Naive thymus-derived CD4-positive, alpha-beta T cell (primary cell): ENCODE measurements at regions of chr3 and their contacts with region 1.

Region 1: GRCh38 chr3:49339945-49340800 is at the start of gene USP4:
- DNase-seq: peak; percentile 78 to 93 (median 91)
- ATAC-seq: peak; percentile 91
- H3K4me3 ChIP-seq: peak within 1 kb of the TSS; percentile 89
- H3K4me3 Mint-ChIP-seq: peak within 1 kb of the TSS; percentile 81 to 96 (median 86)
- H3K27ac ChIP-seq: peak within 1 kb of the TSS; percentile 95
- H3K27ac Mint-ChIP-seq: peak within 1 kb of the TSS; percentile 95 to 99 (median 98)
- H3K4me1 ChIP-seq: peaks cover 23 to 30% of the 10 kb centered on the region in 2 donors
- H3K4me1 Mint-ChIP-seq: peaks cover 32 to 61% (median 47%) of the 10 kb centered on the region in 7 donors
- H3K27me3 ChIP-seq: no peaks in the 10 kb centered on the region
- H3K27me3 Mint-ChIP-seq: no peaks in the 10 kb centered on the region
- total RNA-seq, gene USP4: 98.3 to 135 (median 109) TPM

Region 2: GRCh38 chr3:48635222-48636021 is 704.8 kb before region 1 on chr3 and contains the start of gene SLC26A6:
- CTCF ChIA-PET with region 1: no interaction called
- POLR2A ChIA-PET with region 1: no interaction called
- intact Hi-C with region 1: loop called in 1 of 2 experiments (anchors 5 kb)
- DNase-seq: peak; percentile 81 to 98 (median 86)
- ATAC-seq: peak; percentile 98
- H3K4me3 ChIP-seq: peak within 1 kb of the TSS; percentile 76
- H3K4me3 Mint-ChIP-seq: peak within 1 kb of the TSS; percentile 79 to 92 (median 88)
- H3K27ac ChIP-seq: peak within 1 kb of the TSS; percentile 70
- H3K27ac Mint-ChIP-seq: peak within 1 kb of the TSS in 7 of 9 donors; percentile 12 to 84 (median 68)
- H3K4me1 ChIP-seq: peaks cover 0 to 11% of the 10 kb centered on the region in 2 donors
- H3K4me1 Mint-ChIP-seq: peaks cover 4 to 31% (median 22%) of the 10 kb centered on the region in 7 donors
- H3K27me3 ChIP-seq: no peaks in the 10 kb centered on the region
- H3K27me3 Mint-ChIP-seq: no peaks in the 10 kb centered on the region
- total RNA-seq, gene SLC26A6: 15.1 to 37.6 (median 31.2) TPM

Region 3: DNA sequence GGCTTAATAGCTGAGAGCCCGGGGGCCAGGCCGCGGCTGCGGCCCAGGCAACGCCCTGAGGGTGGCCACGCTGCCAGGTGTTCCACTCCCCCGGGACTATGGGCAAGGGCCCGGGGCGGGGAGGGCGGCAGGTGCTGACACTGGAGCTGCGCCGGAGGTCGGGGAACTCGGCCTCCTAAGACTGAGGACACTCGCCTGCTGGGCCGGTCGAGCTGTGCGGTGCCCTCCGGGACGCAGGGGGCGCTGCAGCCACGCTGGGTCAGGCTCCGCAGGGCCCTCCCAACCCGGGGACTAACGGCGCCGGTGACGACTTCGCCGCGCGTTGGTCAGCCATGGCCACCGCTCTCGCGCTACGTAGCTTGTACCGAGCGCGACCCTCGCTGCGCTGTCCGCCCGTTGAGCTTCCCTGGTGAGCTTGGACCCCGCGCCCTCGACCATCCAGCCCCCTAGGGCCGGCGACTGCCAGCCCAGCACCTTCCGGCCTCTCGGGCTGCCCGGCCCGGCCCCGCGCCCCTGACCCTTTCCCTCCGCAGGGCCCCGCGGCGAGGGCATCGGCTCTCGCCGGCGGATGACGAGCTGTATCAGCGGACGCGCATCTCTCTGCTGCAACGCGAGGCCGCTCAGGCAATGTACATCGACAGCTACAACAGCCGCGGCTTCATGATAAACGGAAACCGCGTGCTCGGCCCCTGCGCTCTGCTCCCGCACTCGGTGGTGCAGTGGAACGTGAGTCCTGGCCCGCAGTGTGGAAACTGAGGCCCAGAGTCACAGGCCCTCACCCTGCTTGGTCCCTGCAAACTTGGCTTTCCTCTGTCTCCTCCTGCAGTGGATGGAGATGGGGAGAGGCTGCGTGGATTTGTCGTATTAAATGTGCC is 318.1 kb before region 1 on chr3 and contains the start of gene NDUFAF3:
- CTCF ChIA-PET with region 1: no interaction called
- POLR2A ChIA-PET with region 1: interaction called, 16 read pairs
- intact Hi-C with region 1: loop called (anchors 1 to 2 kb)
- DNase-seq: peak; percentile 84 to 96 (median 89)
- ATAC-seq: peak; percentile 89
- H3K4me3 ChIP-seq: peak within 1 kb of the TSS; percentile 99
- H3K4me3 Mint-ChIP-seq: peak within 1 kb of the TSS; percentile 92 to 99 (median 97)
- H3K27ac ChIP-seq: peak within 1 kb of the TSS; percentile 98
- H3K27ac Mint-ChIP-seq: peak within 1 kb of the TSS; percentile 95 to 99 (median 98)
- H3K4me1 ChIP-seq: peaks cover 24 to 25% of the 10 kb centered on the region in 2 donors
- H3K4me1 Mint-ChIP-seq: peaks cover 21 to 61% (median 47%) of the 10 kb centered on the region in 7 donors
- H3K27me3 ChIP-seq: no peaks in the 10 kb centered on the region
- H3K27me3 Mint-ChIP-seq: peaks cover 0 to 2% (median 0%) of the 10 kb centered on the region in 5 donors
- total RNA-seq, gene NDUFAF3: 63.8 to 110 (median 89.3) TPM

Region 4: DNA sequence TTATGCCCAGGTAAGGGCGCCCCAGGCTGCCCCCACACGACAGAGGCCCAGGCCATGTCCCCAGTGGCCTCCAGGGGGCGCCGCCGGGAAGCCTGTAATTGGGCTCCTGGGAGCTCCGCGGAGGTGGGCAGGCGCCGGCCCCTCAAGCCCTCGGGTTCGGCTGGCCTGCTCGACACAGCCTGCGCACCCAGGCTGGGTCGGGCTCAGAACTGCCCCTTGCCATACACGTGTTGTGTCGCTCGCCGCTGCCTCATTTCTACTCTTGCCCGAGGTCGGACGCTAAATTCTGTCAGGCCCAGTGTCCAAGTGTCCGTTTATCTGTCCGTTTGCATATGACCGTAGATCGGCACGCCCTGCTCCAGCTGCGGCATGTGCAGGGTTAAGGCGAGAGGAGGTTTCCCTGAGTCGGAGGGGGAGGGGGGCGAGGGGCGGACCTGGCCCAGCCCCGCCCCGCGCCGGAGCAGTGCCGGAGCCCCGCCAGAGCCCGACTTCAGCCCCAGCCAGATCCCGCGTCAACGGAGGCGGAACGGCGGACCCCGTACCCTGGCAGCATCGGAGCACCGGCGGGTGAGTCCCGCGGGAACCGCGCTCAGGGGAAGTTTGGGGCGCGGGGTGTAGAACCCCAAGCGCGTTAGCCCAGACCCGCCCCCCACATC is 168.9 kb before region 1 on chr3 and contains the start of gene KLHDC8B:
- CTCF ChIA-PET with region 1: interaction called, 3 read pairs
- POLR2A ChIA-PET with region 1: interaction called, 5 read pairs
- intact Hi-C with region 1: loop called (anchors 1 to 2 kb)
- DNase-seq: peak; percentile 65 to 89 (median 76)
- ATAC-seq: peak; percentile 88
- H3K4me3 ChIP-seq: peak within 1 kb of the TSS; percentile 95
- H3K4me3 Mint-ChIP-seq: peak within 1 kb of the TSS; percentile 83 to 94 (median 88)
- H3K27ac ChIP-seq: peak within 1 kb of the TSS; percentile 58
- H3K27ac Mint-ChIP-seq: peak within 1 kb of the TSS; percentile 61 to 92 (median 78)
- H3K4me1 ChIP-seq: peaks cover 11 to 26% of the 10 kb centered on the region in 2 donors
- H3K4me1 Mint-ChIP-seq: peaks cover 8 to 40% (median 26%) of the 10 kb centered on the region in 7 donors
- H3K27me3 ChIP-seq: no peaks in the 10 kb centered on the region
- H3K27me3 Mint-ChIP-seq: no peaks in the 10 kb centered on the region
- total RNA-seq, gene KLHDC8B: 1.5 to 7.1 (median 5.2) TPM

Region 5: DNA sequence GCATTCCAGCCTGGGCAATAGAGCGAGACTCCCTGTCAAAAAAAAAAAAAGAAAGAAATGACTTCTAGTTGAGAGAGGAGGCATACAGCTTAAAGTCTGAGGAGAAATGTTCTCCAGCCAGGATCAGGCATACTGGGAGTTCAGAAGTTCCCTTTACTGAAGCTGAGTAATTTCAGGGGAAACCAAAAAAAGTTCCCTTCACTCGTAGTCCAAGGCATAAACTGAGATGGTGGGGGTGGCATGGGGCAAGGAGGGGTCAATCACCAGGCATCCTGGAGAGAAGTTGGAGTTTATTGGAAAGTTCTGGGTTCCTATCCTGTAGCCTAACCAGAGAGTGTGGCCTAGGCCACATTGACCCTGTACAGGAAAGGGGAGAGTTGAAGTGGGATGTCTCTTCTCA is 12.1 kb after region 1 on chr3:
- CTCF ChIA-PET with region 1: interaction called, 12 read pairs
- POLR2A ChIA-PET with region 1: interaction called, 80 read pairs
- intact Hi-C with region 1: no loop called
- DNase-seq: no peak
- ATAC-seq: no peak
- H3K4me3 ChIP-seq: no peak overlapping the region
- H3K4me3 Mint-ChIP-seq: no peak overlapping the region
- H3K27ac ChIP-seq: no peak overlapping the region
- H3K27ac Mint-ChIP-seq: peak overlapping the region in 1 of 9 donors; percentile 22
- H3K4me1 ChIP-seq: peaks cover 7 to 8% of the 10 kb centered on the region in 2 donors
- H3K4me1 Mint-ChIP-seq: peaks cover 6 to 22% (median 14%) of the 10 kb centered on the region in 7 donors
- H3K27me3 ChIP-seq: no peaks in the 10 kb centered on the region
- H3K27me3 Mint-ChIP-seq: no peaks in the 10 kb centered on the region

Region 6: DNA sequence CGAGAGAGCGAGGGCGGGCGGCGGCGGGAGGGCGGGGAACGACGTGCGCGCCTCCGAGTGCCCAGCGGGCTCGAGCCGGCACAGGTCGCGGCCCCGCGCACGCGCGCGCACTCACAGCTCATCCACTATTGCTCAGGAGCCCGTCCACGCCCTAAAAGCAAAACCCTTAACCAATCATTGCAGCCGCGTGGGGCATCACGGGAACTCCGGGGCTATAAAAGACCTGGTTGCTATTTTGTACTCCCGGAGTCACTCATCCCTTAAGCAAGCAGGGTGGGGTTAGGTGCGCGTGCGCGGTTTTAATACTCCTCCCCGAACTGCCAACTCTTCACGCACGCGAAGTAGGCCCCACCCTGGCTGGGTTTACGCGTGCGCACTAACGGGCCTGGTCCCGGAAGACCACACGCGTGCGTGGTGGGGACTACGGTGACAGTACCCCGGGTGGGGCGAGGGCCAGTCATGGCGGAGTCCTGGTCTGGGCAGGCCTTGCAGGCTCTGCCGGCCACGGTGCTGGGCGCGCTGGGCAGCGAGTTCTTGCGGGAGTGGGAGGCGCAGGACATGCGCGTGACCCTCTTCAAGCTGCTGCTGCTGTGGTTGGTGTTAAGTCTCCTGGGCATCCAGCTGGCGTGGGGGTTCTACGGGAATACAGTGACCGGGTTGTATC is 71.9 kb after region 1 on chr3 and contains the starts of genes RHOA and TCTA:
- CTCF ChIA-PET with region 1: interaction called, 11 read pairs
- POLR2A ChIA-PET with region 1: interaction called, 71 read pairs
- intact Hi-C with region 1: loop called (anchors 1 kb)
- DNase-seq: peak; percentile 94 to 100 (median 99)
- ATAC-seq: peak; percentile 90
- H3K4me3 ChIP-seq: peak within 1 kb of the TSS; percentile 86
- H3K4me3 Mint-ChIP-seq: peak within 1 kb of the TSS; percentile 82 to 97 (median 94)
- H3K27ac ChIP-seq: peak within 1 kb of the TSS; percentile 96
- H3K27ac Mint-ChIP-seq: peak within 1 kb of the TSS; percentile 88 to 97 (median 95)
- H3K4me1 ChIP-seq: peaks cover 61 to 65% of the 10 kb centered on the region in 2 donors
- H3K4me1 Mint-ChIP-seq: peaks cover 51 to 82% (median 71%) of the 10 kb centered on the region in 7 donors
- H3K27me3 ChIP-seq: no peaks in the 10 kb centered on the region
- H3K27me3 Mint-ChIP-seq: peaks cover 0 to 2% (median 0%) of the 10 kb centered on the region in 5 donors
- total RNA-seq, gene RHOA: 212 to 411 (median 218) TPM
- total RNA-seq, gene TCTA: 24.9 to 34.5 (median 28.5) TPM

Region 7: DNA sequence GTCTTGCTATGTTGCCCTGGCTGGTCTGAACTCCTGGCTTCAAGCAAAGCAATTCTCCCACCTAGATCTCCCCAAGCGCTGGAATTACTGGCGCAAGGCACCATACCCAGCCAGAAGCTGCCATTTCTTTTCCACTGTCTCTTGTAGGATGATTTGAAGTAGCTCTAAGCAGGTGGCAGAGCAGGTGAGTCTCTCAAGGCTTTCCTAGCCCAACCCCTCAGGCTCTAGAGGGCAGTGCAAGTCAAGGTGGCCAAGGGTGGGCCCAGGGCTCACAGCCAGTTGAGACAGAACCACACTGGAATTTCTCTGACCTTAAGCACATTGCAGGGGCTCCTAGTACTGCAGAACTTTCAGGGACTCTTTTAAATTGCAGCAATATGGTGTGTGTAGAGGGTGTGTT is 114.3 kb after region 1 on chr3:
- CTCF ChIA-PET with region 1: interaction called, 45 read pairs
- POLR2A ChIA-PET with region 1: interaction called, 24 read pairs
- intact Hi-C with region 1: loop called (anchors 1 kb)
- DNase-seq: no peak
- ATAC-seq: no peak
- H3K4me3 ChIP-seq: no peak overlapping the region
- H3K4me3 Mint-ChIP-seq: no peak overlapping the region
- H3K27ac ChIP-seq: no peak overlapping the region
- H3K27ac Mint-ChIP-seq: peak overlapping the region in 1 of 9 donors; percentile 63
- H3K4me1 ChIP-seq: no peaks in the 10 kb centered on the region
- H3K4me1 Mint-ChIP-seq: no peaks in the 10 kb centered on the region
- H3K27me3 ChIP-seq: no peaks in the 10 kb centered on the region
- H3K27me3 Mint-ChIP-seq: no peaks in the 10 kb centered on the region

Region 8: GRCh38 chr3:50486219-50486888 is 1146.2 kb after region 1 on chr3:
- CTCF ChIA-PET with region 1: no interaction called
- POLR2A ChIA-PET with region 1: no interaction called
- intact Hi-C with region 1: no loop called
- DNase-seq: no peak
- ATAC-seq: no peak
- H3K4me3 ChIP-seq: no peak overlapping the region
- H3K4me3 Mint-ChIP-seq: no peak overlapping the region
- H3K27ac ChIP-seq: no peak overlapping the region
- H3K27ac Mint-ChIP-seq: no peak overlapping the region
- H3K4me1 ChIP-seq: peaks cover 4% of the 10 kb centered on the region in 2 donors
- H3K4me1 Mint-ChIP-seq: peaks cover 0 to 23% (median 9%) of the 10 kb centered on the region in 7 donors
- H3K27me3 ChIP-seq: no peaks in the 10 kb centered on the region
- H3K27me3 Mint-ChIP-seq: no peaks in the 10 kb centered on the region